AG04450 (cell line): ENCODE measurements at regions of chr13 and their contacts with region 1.

Region 1: DNA sequence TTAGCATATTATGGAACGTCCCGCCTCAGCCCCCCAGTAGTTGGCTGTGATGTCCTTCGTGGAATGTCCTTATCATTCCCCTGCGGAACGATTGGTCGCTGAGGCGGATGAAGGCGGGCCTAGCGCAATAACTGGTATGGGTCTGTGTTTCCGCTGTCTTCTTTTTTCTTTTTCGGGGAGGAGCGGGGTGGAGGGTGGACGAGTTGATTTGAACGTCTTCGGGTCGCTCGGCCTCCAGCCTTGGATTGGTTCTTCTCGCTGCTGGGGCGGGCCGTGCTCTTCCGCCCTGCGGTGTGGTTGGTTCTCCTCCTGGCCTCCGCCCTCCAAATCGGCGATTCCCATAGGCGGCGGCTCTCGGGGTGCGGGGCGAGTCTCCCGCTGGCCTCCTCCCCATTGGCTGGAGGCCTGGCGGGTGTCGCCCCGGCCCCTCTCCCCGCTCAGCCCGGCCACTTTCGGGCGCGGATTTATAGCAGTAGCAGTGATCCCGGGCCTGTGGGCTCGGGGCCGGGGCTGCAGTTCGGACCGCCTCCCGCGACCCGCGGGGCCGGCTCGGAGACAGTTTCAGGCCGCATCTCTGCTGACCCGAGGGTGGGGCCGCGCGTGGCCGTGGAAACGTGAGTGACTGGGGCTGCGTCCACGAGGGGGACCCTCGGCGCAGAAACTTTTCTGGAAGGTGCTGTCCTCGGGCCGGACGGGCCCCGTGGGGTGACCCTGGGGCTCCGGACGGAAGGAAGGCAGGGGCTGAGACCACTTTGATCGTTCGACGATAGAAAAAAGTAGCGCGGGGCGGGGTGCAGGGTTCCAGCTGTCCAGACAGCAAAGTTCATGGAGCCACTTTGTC is 2.1 kb downstream of the ING1 start:
- DNase-seq: peak; percentile 99
- H3K4me3 ChIP-seq: peak overlapping the region; percentile 93
- H3K27ac ChIP-seq: peak overlapping the region; percentile 61
- H3K27me3 ChIP-seq: no peaks in the 10 kb centered on the region
- CTCF ChIP-seq: peak; percentile 35

Region 2: DNA sequence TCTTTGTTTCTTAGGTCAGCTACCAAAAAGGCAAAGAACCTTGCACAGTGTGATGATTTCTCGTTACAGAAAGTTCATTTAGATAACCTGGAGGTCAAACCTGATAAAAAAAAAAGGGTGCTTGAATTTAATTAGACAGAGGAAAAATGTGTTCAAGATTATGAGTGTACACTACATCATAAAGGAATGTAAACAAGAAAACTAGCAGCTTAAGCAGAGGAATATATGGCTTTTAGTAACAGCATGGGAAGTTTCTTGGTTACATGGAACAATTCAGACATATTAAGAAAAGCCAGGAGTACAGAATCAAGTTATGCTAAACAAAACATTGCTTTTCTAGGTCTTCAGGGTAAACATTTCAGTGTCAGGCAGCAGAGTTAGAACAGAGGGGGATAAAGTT is 30.8 kb after region 1 on chr13:
- CTCF ChIA-PET with region 1: no interaction called
- POLR2A ChIA-PET with region 1: interaction called, 16 read pairs
- DNase-seq: no peak
- H3K4me3 ChIP-seq: no peak overlapping the region
- H3K27ac ChIP-seq: no peak overlapping the region
- H3K27me3 ChIP-seq: no peaks in the 10 kb centered on the region
- CTCF ChIP-seq: no peak

Region 3: GRCh38 chr13:110799246-110800236 is 83.9 kb after region 1 on chr13:
- CTCF ChIA-PET with region 1: interaction called, 3 read pairs
- POLR2A ChIA-PET with region 1: interaction called, 18 read pairs
- DNase-seq: peak; percentile 86
- H3K4me3 ChIP-seq: peak overlapping the region; percentile 50
- H3K27ac ChIP-seq: peak overlapping the region; percentile 96
- H3K27me3 ChIP-seq: no peaks in the 10 kb centered on the region
- CTCF ChIP-seq: no peak

Region 4: GRCh38 chr13:110819203-110820014 is 103.8 kb after region 1 on chr13:
- CTCF ChIA-PET with region 1: interaction called, 11 read pairs
- POLR2A ChIA-PET with region 1: interaction called, 5 read pairs
- DNase-seq: no peak
- H3K4me3 ChIP-seq: no peak overlapping the region
- H3K27ac ChIP-seq: no peak overlapping the region
- H3K27me3 ChIP-seq: peaks cover 9% of the 10 kb centered on the region
- CTCF ChIP-seq: peak; percentile 97

Region 5: DNA sequence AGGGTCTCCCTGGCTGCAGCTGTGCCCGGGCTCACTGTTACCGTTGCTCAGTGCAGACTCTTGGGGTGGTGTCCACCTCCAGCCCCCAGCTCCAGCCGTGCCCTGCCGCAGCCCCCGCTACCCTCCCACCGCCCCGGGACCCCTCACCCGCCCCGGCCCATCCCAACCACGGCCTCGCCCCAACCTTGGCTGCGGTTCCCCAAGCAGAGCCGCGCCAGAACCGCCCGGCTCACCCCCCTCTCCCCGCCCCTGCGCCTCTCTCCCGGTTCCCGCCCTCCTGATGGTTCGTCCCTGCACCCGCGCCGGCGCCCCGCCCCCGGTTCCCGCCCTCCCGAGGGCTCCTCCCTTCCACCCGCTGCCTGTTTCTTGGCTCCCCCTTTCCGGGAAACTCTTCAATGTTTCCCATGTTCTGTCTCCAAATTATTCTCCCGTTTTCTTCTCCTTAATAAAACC is 158.9 kb after region 1 on chr13:
- CTCF ChIA-PET with region 1: no interaction called
- POLR2A ChIA-PET with region 1: interaction called, 19 read pairs
- DNase-seq: no peak
- H3K4me3 ChIP-seq: peak overlapping the region; percentile 58
- H3K27ac ChIP-seq: no peak overlapping the region
- H3K27me3 ChIP-seq: no peaks in the 10 kb centered on the region
- CTCF ChIP-seq: no peak

Region 6: DNA sequence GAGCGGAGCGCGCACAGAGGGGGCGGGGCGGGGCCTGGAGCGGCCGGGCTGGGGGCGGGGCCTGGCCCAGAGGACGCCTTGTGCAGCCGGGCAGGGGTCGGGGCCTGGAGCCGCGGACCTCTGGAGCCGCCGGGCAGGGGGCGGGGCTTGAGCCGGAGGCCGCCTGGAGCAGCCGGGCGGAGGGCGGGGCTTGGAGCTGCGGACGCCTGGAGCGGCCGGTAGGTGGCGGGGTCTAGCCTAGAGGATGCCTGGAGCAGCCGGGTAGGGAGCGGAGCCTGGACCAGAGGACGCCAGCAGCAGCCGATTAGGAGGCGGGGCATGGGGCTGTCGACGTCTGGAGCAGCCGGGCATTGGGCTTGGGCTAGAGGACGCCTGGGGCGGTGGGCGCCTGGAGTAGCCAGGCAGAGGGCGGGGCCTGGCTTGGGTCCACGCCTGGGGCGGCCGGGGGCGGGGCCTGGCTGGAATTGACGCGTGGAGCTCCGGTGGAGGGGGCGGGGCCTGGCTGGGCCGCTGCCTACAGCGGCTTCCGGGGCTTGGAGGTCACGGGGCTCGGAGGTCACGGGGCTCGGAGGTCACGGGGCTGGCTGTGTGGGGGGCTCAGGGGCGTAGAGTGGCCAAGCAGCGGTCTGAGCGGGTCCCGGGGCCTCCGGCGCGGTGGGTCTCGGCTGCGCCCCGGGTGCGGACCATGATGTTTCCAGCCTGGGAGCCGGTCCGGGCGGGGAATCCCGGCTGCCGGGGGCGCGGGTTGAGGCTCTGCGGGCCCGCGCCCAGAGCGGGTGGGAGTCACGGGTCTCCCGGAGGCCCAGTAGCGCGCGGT is 199.7 kb after region 1 on chr13 and contains the start of gene ANKRD10:
- CTCF ChIA-PET with region 1: interaction called, 3 read pairs
- POLR2A ChIA-PET with region 1: interaction called, 13 read pairs
- DNase-seq: peak; percentile 98
- H3K4me3 ChIP-seq: peak within 1 kb of the TSS; percentile 99
- H3K27ac ChIP-seq: peak within 1 kb of the TSS; percentile 97
- H3K27me3 ChIP-seq: no peaks in the 10 kb centered on the region
- CTCF ChIP-seq: peak; percentile 76
- polyA plus RNA-seq, gene ANKRD10: 85.8 and 105 TPM in 2 replicates